Activated CD8-positive, alpha-beta T cell treated with anti-CD3 and anti-CD28 coated beads for 36 hours (primary cell): ENCODE measurements at regions of chr15 and their contacts with region 1.

Region 1: GRCh38 chr15:38690689-38691332 is 126.2 kb upstream of the RASGRP1 start:
- DNase-seq: peak; percentile 88
- ATAC-seq: peak; percentile 38
- H3K4me3 Mint-ChIP-seq: no peak overlapping the region
- H3K27ac Mint-ChIP-seq: peak overlapping the region; percentile 62
- H3K4me1 Mint-ChIP-seq: peaks cover 71% of the 10 kb centered on the region
- H3K27me3 Mint-ChIP-seq: no peaks in the 10 kb centered on the region
- CTCF ChIP-seq: peak; percentile 91

Region 2: GRCh38 chr15:38440353-38441129 is 250.3 kb before region 1 on chr15:
- CTCF ChIA-PET with region 1: interaction called, 225 read pairs
- POLR2A ChIA-PET with region 1: no interaction called
- intact Hi-C with region 1: loop called (anchors 2 kb)
- DNase-seq: peak; percentile 70
- ATAC-seq: peak; percentile 95
- H3K4me3 Mint-ChIP-seq: no peak overlapping the region
- H3K27ac Mint-ChIP-seq: no peak overlapping the region
- H3K4me1 Mint-ChIP-seq: peaks cover 9% of the 10 kb centered on the region
- H3K27me3 Mint-ChIP-seq: peaks cover 8% of the 10 kb centered on the region
- CTCF ChIP-seq: peak; percentile 96

Region 3: DNA sequence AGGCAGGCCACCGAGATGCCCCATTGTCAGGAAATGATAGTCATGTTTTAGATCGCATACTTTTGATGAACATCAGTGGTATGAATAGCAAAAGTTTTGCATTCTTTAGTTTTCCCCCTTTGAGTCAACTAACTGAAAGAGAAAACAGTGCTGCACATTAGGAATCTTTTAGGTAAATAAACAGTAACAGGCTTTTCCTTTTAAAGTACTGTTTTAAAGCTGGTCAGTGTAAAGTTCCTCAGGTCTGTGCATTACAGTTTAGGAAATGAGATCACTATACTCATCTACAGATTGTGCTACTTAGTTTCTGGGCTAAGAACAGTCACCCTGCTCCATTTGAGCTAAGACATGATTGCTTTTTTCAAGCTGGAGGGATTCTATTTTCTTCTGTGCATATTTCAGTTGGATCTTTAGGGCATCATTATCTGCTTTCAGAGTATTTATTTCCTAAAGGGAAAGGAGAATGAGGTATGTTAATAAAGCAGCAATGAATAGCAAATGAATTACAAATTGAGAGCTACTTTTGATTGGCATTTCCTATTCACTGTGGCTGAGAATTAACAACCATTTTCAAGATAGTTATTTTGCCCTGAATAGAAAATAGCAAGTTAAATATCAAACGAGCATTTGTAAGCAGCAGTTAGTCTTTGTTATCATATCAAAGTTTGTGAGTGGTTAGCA is 200.4 kb before region 1 on chr15:
- CTCF ChIA-PET with region 1: interaction called, 44 read pairs
- POLR2A ChIA-PET with region 1: interaction called, 5 read pairs
- intact Hi-C with region 1: loop called (anchors 5 kb)
- DNase-seq: no peak
- ATAC-seq: no peak
- H3K4me3 Mint-ChIP-seq: no peak overlapping the region
- H3K27ac Mint-ChIP-seq: peak overlapping the region; percentile 78
- H3K4me1 Mint-ChIP-seq: peaks cover 56% of the 10 kb centered on the region
- H3K27me3 Mint-ChIP-seq: no peaks in the 10 kb centered on the region
- CTCF ChIP-seq: no peak

Region 4: GRCh38 chr15:38530113-38530512 is 160.7 kb before region 1 on chr15:
- CTCF ChIA-PET with region 1: interaction called, 68 read pairs
- POLR2A ChIA-PET with region 1: interaction called, 16 read pairs
- intact Hi-C with region 1: no loop called
- DNase-seq: peak; percentile 79
- ATAC-seq: peak; percentile 93
- H3K4me3 Mint-ChIP-seq: peak overlapping the region; percentile 28
- H3K27ac Mint-ChIP-seq: peak overlapping the region; percentile 97
- H3K4me1 Mint-ChIP-seq: peaks cover 98% of the 10 kb centered on the region
- H3K27me3 Mint-ChIP-seq: no peaks in the 10 kb centered on the region
- CTCF ChIP-seq: no peak

Region 5: GRCh38 chr15:38563723-38564519 is 126.9 kb before region 1 on chr15:
- CTCF ChIA-PET with region 1: interaction called, 464 read pairs
- POLR2A ChIA-PET with region 1: interaction called, 192 read pairs
- intact Hi-C with region 1: loop called (anchors 2 kb)
- DNase-seq: peak; percentile 89
- ATAC-seq: peak; percentile 63
- H3K4me3 Mint-ChIP-seq: peak overlapping the region; percentile 83
- H3K27ac Mint-ChIP-seq: peak overlapping the region; percentile 96
- H3K4me1 Mint-ChIP-seq: peaks cover 52% of the 10 kb centered on the region
- H3K27me3 Mint-ChIP-seq: no peaks in the 10 kb centered on the region
- CTCF ChIP-seq: peak; percentile 96

Region 6: GRCh38 chr15:38647683-38648082 is 43.1 kb before region 1 on chr15:
- CTCF ChIA-PET with region 1: interaction called, 97 read pairs
- POLR2A ChIA-PET with region 1: interaction called, 9 read pairs
- intact Hi-C with region 1: no loop called
- DNase-seq: no peak
- ATAC-seq: no peak
- H3K4me3 Mint-ChIP-seq: no peak overlapping the region
- H3K27ac Mint-ChIP-seq: no peak overlapping the region
- H3K4me1 Mint-ChIP-seq: peaks cover 71% of the 10 kb centered on the region
- H3K27me3 Mint-ChIP-seq: no peaks in the 10 kb centered on the region
- CTCF ChIP-seq: no peak

Region 7: DNA sequence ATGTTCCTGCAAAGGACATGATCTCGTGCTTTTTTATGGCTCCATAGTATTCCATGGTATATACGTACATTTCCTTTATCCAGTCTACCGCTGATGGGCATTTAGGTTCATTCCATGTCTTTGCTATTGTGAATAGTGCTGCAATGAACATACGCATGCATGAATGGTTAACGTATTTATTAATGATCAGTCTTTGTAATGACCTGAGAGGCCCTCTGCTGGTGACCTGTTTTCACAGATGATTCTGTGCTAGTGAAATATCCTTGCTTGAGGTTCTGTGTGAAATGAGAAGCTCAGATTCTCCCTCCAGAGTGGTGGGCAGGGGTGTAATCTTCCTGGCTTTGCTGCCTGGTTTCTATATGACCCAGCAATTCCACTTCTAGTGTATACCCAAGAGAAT is 34.0 kb after region 1 on chr15:
- CTCF ChIA-PET with region 1: no interaction called
- POLR2A ChIA-PET with region 1: no interaction called
- intact Hi-C with region 1: no loop called
- DNase-seq: no peak
- ATAC-seq: no peak
- H3K4me3 Mint-ChIP-seq: no peak overlapping the region
- H3K27ac Mint-ChIP-seq: no peak overlapping the region
- H3K4me1 Mint-ChIP-seq: no peaks in the 10 kb centered on the region
- H3K27me3 Mint-ChIP-seq: no peaks in the 10 kb centered on the region
- CTCF ChIP-seq: no peak